ENCODE measurements at regions of chr18 and their contacts with region 1.

Region 1: DNA sequence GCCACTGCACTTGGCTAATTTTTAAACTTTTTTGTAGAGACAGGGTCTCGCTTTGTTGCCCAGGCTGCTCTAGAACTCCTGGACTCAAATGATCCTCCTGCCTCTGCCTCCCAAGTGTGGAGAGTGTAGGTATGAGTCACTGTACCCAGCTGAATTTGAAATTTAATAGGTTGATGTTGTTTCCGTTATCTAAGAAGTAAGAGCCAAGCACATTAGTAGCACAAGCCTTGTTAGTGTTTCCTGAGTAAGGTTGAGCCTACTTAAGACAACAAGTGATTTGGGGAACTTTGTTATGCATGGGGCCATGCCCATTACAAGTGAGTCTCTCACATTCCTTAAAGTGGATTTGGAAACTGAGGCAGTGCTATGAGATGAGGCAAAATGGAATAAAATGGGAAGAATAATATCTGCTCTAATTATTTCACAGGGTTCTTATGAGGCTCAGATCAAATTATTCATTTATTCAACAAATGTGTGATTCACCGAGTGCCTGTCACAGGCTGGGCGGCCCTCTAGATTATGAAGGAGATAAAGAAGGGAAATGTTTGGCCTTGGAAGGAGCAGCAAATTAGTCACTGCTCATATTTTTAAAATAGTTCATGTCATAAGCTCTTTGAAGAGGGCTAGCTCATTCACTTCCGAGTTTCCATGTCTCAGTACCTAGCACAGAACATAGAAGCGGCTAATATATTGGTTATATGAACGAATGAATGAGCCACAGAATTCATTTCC is 217.2 kb downstream of the LDLRAD4 start:
- DNase-seq: peak; percentile 81 to 83
- H3K4me3 ChIP-seq: no peak overlapping the region
- H3K27ac ChIP-seq: peak overlapping the region; percentile 65 to 74
- H3K4me1 ChIP-seq: peaks cover 0 to 65% (median 27%) of the 10 kb centered on the region in 4 donors
- H3K27me3 ChIP-seq: no peaks in the 10 kb centered on the region
- CTCF ChIP-seq: no peak

Region 2: GRCh38 chr18:13221869-13222855 is 213.6 kb before region 1 on chr18:
- intact Hi-C with region 1: loop called (anchors 5 kb)
- DNase-seq: peak; percentile 65 to 85
- H3K4me3 ChIP-seq: peak overlapping the region; percentile 9 to 22
- H3K27ac ChIP-seq: peak overlapping the region; percentile 89
- H3K4me1 ChIP-seq: peaks cover 6 to 54% (median 44%) of the 10 kb centered on the region in 4 donors
- H3K27me3 ChIP-seq: no peaks in the 10 kb centered on the region
- CTCF ChIP-seq: no peak

Region 3: GRCh38 chr18:13597068-13597467 is 161.3 kb after region 1 on chr18:
- intact Hi-C with region 1: no loop called
- DNase-seq: no peak
- H3K4me3 ChIP-seq: no peak overlapping the region
- H3K27ac ChIP-seq: no peak overlapping the region
- H3K4me1 ChIP-seq: no peaks in the 10 kb centered on the region
- H3K27me3 ChIP-seq: no peaks in the 10 kb centered on the region
- CTCF ChIP-seq: no peak

Measured in tibial artery (tissue), 4 donors.